ENCODE measurements at regions of chr12 and their contacts with region 1.

Region 1: GRCh38 chr12:26122681-26123481 is 2.0 kb downstream of the BHLHE41 start:
- DNase-seq: peak; percentile 71 to 76 (median 76)
- ATAC-seq: peak; percentile 24
- H3K4me3 ChIP-seq: peak overlapping the region; percentile 17
- H3K4me1 ChIP-seq: peaks cover 21% of the 10 kb centered on the region
- CTCF ChIP-seq: peak; percentile 10

Region 2: GRCh38 chr12:25935355-25936144 is 187.3 kb before region 1 on chr12:
- intact Hi-C with region 1: no loop called
- DNase-seq: no peak
- ATAC-seq: no peak
- H3K4me3 ChIP-seq: no peak overlapping the region
- H3K4me1 ChIP-seq: no peaks in the 10 kb centered on the region
- CTCF ChIP-seq: no peak

Region 3: GRCh38 chr12:25958428-25959070 is 164.3 kb before region 1 on chr12 and contains the start of gene RASSF8:
- intact Hi-C with region 1: loop called in 1 of 2 experiments (anchors 5 kb)
- DNase-seq: peak; percentile 53 to 76 (median 60)
- ATAC-seq: peak; percentile 88
- H3K4me3 ChIP-seq: peak within 1 kb of the TSS; percentile 34
- H3K4me1 ChIP-seq: peaks cover 9% of the 10 kb centered on the region
- CTCF ChIP-seq: no peak
- total RNA-seq, gene RASSF8: 3.2 to 109 (median 8.0) TPM